ENCODE measurements at regions of chr17 and their contacts with region 1.

Region 1: DNA sequence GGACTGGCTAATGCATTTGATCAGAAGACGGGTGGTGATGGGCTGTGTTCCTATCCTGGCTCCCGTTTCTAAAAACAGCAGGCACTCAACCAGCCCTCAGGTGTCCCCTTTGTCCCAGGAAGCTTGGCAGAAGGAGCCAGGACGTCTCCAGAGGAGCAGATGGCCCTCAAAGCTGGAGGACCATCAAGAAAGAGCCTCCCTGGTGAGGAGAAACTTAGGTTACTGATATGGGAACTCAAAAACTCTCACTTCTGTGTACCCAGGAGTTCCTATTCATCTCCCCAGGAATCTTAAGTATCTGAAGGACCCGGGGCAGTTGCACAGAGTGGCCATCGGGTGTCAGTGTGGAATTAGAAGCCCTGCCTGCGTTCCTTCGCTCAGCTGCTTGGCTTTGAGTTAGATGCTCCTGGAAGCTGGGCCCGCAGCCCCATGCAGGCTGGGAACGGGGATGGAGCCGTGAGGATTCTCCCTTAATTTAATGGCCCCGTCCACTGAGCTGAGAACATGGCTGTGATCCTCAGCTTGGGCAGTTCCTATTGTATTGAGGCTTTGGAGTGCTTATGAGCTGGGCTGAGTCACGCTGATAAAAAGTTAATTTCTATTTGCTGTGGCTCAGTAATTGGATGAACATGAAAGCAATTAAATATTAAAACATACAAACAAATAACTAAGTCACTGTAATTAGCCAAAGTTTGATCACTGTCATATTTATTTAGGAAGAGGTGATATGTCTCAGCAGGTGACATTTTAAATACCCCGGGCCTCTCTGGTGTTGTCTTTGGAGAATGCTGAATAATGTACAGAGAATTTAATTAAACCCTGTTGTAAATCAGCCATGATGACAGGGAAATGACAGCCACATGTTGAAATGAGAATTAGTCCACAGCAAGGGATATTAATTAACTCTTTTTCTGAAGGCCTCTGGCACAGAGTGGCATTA is 402.1 kb downstream of the SEC14L1 start:
- DNase-seq: peak; percentile 73 to 93 (median 88)
- H3K4me3 ChIP-seq: peak overlapping the region in 4 of 59 donors; percentile 6 to 26 (median 16)
- H3K27ac ChIP-seq: peak overlapping the region in 6 of 59 donors; percentile 35 to 58 (median 42)
- H3K27me3 ChIP-seq: peaks cover 0 to 4% (median 0%) of the 10 kb centered on the region in 45 donors
- CTCF ChIP-seq: peak; percentile 73 to 97 (median 92)

Region 2: GRCh38 chr17:77734341-77735080 is 191.7 kb after region 1 on chr17:
- intact Hi-C with region 1: loop called (anchors 5 kb)
- DNase-seq: peak; percentile 66 to 93 (median 88)
- H3K4me3 ChIP-seq: peak overlapping the region in 46 of 59 donors; percentile 3 to 55 (median 30)
- H3K27ac ChIP-seq: peak overlapping the region; percentile 55 to 97 (median 86)
- H3K27me3 ChIP-seq: peaks cover 0 to 14% (median 0%) of the 10 kb centered on the region in 45 donors
- CTCF ChIP-seq: peak in 47 of 56 donors; percentile 8 to 69 (median 41)

Region 3: GRCh38 chr17:77821097-77821496 is 278.3 kb after region 1 on chr17:
- intact Hi-C with region 1: loop called (anchors 5 to 10 kb)
- DNase-seq: no peak
- H3K4me3 ChIP-seq: no peak overlapping the region
- H3K27ac ChIP-seq: no peak overlapping the region
- H3K27me3 ChIP-seq: no peaks in the 10 kb centered on the region
- CTCF ChIP-seq: peak in 31 of 56 donors; percentile 5 to 51 (median 29)

Region 4: DNA sequence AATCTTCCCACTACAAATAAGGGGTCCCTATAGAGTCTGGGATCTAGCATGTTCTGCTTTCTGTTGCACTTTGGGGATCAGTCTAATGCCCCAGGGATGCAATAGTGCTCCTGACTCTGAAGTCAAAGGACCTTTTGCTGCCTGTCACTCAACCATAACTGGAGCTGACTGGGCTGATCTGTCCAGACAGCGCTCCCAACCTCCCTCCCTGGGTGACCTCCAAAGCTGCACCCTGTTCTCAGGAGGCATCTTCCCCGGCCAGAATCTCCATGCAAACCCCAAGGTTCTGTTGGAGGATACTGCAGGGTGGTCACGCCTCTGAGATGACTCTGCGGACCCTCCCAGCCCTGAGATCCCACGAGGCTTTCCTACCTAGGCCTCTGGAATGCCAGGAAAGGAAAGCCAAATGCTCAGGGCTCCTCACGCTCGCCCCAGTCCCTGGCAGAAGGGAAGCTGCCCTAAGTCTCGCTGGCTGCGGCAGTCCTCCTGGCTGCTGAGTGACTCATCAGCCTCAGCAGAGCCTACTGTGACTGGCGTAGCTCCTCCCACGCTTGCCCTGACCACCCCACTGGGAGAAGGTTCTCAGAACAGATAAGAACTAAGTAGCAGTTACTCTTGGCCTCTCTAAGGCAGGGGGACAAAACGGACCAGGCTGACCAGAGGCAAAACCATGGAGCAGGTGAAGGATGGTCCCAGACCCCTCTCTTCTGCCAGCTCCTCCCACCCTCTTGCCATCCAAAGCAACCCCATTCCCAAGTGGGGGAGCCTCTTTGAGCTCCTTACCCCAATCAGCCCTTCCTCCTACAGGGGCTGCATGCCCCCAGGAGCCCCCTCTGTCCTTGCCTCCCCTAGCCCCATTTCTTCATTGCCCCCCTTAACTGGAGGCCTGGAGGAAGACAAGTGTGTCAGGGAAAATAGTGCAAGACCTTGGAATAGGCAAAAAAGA is 291.6 kb after region 1 on chr17:
- intact Hi-C with region 1: loop called in 1 of 2 experiments (anchors 10 kb)
- DNase-seq: peak in 8 of 10 donors; percentile 47 to 85 (median 66)
- H3K4me3 ChIP-seq: no peak overlapping the region
- H3K27ac ChIP-seq: peak overlapping the region in 9 of 59 donors; percentile 7 to 59 (median 38)
- H3K27me3 ChIP-seq: no peaks in the 10 kb centered on the region
- CTCF ChIP-seq: no peak

Region 5: DNA sequence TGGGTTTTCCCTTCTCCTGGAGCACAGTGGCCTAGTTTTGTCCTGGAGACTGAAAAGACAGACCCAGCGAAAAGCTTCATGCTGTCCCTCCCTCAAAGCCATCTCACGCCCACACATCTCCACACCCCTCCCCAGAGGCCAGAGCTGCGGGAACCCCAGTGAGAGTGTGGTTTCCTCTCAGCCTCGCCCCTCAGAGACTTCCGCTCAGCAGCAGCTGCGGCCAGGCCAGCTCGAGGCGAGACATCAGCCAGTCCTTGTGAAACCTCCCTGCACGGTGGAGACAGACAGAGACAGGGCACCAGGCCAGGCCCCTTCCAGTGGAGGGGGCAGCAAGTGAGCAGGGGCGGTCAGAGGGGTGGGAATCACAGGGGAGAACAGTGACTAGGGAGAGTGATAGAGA is 338.7 kb after region 1 on chr17:
- intact Hi-C with region 1: loop called in 1 of 2 experiments (anchors 10 kb)
- DNase-seq: peak in 5 of 10 donors; percentile 36 to 61 (median 42)
- H3K4me3 ChIP-seq: no peak overlapping the region
- H3K27ac ChIP-seq: peak overlapping the region in 48 of 59 donors; percentile 4 to 92 (median 80)
- H3K27me3 ChIP-seq: no peaks in the 10 kb centered on the region
- CTCF ChIP-seq: no peak

Region 6: DNA sequence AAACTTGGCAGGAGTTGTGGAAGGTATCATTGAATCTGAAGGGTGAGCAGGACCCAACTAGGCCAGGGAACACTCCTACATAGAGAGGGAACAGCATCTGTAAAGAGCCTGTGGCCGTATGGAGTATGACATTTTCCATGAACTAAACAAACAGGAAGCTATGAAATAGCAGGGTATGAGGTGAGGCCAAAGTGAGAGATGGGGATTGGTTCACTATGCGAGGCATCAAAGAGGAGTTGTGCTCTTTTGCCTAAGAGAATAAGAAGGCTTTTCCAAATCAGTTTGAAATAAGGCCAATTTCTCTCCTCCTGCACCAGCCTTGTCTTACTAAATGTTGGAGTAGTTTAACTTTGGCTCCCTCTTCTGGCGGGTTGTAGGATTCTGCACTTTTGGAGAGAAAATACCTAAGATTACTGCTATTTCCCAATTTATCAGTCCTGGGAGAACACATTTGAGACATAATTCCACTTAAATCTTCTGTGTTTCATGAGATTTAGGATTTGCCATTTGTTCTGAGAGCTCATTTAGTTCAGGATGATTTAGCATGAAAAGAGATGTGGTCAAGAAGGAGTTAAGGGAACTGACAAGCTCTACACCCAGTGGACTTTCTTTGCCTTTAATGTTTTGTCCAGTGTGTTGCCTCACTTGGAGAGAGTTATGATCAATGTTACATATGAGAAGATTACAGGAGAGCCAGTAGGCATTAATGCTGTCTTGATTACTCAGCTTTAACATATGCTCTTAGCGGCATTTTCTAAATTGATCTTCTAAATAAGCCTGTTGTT is 471.1 kb after region 1 on chr17:
- intact Hi-C with region 1: loop called (anchors 1 to 2 kb)
- DNase-seq: peak in 4 of 10 donors; percentile 41 to 76 (median 58)
- H3K4me3 ChIP-seq: no peak overlapping the region
- H3K27ac ChIP-seq: peak overlapping the region in 44 of 59 donors; percentile 2 to 77 (median 42)
- H3K27me3 ChIP-seq: no peaks in the 10 kb centered on the region
- CTCF ChIP-seq: peak; percentile 58 to 98 (median 87)